ENCODE measurements at regions of chr10 and their contacts with region 1.

Region 1: GRCh38 chr10:18151356-18151890 is 11.2 kb downstream of the CACNB2 start:
- DNase-seq: no peak
- ATAC-seq: no peak
- H3K4me3 Mint-ChIP-seq: no peak overlapping the region
- H3K27ac Mint-ChIP-seq: no peak overlapping the region
- H3K4me1 Mint-ChIP-seq: no peaks in the 10 kb centered on the region
- H3K27me3 Mint-ChIP-seq: no peaks in the 10 kb centered on the region
- CTCF ChIP-seq: no peak

Region 2: DNA sequence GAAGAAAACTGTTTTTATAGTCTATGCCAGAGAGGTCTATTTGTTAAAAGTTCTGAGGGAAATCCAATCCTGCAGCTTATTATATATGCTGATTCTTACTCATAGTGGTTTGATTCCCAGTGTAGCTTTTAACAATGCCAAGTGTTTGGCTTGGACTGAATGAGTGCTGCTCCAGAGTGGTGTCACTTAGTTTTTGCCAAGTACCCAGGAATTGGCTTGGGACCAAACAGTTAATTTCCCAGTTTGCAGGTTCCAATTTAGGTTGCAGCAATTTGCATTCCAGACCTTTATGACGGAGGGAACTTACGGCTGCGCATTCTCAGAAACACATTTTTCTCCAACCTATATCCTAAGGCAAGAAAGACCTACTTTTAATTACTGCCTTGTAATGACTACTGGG is 467.6 kb after region 1 on chr10:
- CTCF ChIA-PET with region 1: no interaction called
- POLR2A ChIA-PET with region 1: no interaction called
- intact Hi-C with region 1: loop called (anchors 5 kb)
- DNase-seq: no peak
- ATAC-seq: no peak
- H3K4me3 Mint-ChIP-seq: no peak overlapping the region
- H3K27ac Mint-ChIP-seq: no peak overlapping the region
- H3K4me1 Mint-ChIP-seq: no peaks in the 10 kb centered on the region
- H3K27me3 Mint-ChIP-seq: no peaks in the 10 kb centered on the region
- CTCF ChIP-seq: no peak